H1 (cell line): ENCODE measurements at regions of chr11 and their contacts with region 1.

Region 1: GRCh38 chr11:116641561-116642045 is 131.2 kb downstream of the BUD13 start:
- DNase-seq: peak; percentile 39 to 92
- H3K4me3 ChIP-seq: no peak overlapping the region
- H3K27ac ChIP-seq: no peak overlapping the region
- H3K4me1 ChIP-seq: peaks cover 0 to 9% (median 2%) of the 10 kb centered on the region in 4 experiments; a peak in 5 of 7 replicates
- H3K27me3 ChIP-seq: 0 out of 7 replicates have a peak, but pooled peaks cover 0 to 3% (median 0%) of the 10 kb centered on the region in 4 experiments
- CTCF ChIP-seq: peak; percentile 95 to 100 (median 97)
- EP300 ChIP-seq: no peak
- POLR2A ChIP-seq: no peak
- RAD21 ChIP-seq: peak; percentile 97 to 98

Region 2: DNA sequence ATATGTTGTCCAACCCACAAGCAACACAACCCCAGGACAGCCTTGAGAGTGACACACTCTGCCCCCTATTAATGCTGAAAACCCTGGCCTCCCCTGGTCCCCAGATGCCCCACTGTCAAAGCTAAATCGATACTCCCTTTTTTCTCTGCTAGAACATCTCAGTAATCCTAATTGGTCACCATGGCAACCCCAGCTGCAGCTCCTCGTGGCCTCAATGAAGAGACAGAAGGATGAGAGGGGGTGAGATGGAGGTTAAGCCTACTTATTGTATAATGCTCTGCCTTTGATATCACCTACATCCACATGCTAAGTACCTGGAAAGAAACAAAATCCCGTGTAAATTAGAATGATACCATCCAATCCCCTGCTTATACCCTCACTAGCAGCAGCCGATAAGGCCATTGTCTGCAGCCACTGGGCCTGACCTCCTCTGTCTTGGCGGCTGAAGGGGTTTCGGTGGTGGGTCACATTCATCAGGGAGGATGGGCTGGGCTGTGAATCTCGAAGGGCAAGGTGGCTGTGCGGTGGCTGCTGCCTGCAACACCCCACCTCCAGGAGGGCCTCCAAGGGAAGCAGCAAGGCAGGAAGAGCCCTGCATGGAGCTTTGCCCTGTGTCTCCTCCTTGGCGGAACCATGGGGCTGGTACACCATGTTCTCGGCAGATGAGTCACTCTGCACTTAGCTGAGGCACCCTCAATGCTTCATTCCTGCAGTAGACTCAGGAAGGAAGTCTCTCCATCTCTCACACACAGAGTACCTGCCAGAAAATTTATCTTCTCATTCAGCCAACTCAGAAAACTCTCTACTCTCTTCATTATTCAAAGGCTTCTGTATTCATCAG is 268.3 kb before region 1 on chr11:
- CTCF ChIA-PET with region 1: interaction called, 11 read pairs
- POLR2A ChIA-PET with region 1: no interaction called
- DNase-seq: no peak
- H3K4me3 ChIP-seq: no peak overlapping the region
- H3K27ac ChIP-seq: no peak overlapping the region
- H3K4me1 ChIP-seq: no peaks in the 10 kb centered on the region; a peak in 1 of 7 replicates
- H3K27me3 ChIP-seq: no peaks in the 10 kb centered on the region
- CTCF ChIP-seq: no peak
- EP300 ChIP-seq: no peak
- POLR2A ChIP-seq: no peak
- RAD21 ChIP-seq: no peak

Region 3: GRCh38 chr11:116513894-116514293 is 127.7 kb before region 1 on chr11:
- CTCF ChIA-PET with region 1: interaction called, 94 read pairs
- POLR2A ChIA-PET with region 1: no interaction called
- DNase-seq: peak; percentile 47 to 89
- H3K4me3 ChIP-seq: no peak overlapping the region
- H3K27ac ChIP-seq: no peak overlapping the region
- H3K4me1 ChIP-seq: peaks cover 0 to 8% (median 2%) of the 10 kb centered on the region in 4 experiments; a peak in 3 of 7 replicates
- H3K27me3 ChIP-seq: peaks cover 0 to 4% (median 0%) of the 10 kb centered on the region in 4 experiments; a peak in 2 of 7 replicates
- CTCF ChIP-seq: peak; percentile 61 to 69 (median 65)
- EP300 ChIP-seq: no peak
- POLR2A ChIP-seq: no peak
- RAD21 ChIP-seq: peak; percentile 62 to 76

Region 4: DNA sequence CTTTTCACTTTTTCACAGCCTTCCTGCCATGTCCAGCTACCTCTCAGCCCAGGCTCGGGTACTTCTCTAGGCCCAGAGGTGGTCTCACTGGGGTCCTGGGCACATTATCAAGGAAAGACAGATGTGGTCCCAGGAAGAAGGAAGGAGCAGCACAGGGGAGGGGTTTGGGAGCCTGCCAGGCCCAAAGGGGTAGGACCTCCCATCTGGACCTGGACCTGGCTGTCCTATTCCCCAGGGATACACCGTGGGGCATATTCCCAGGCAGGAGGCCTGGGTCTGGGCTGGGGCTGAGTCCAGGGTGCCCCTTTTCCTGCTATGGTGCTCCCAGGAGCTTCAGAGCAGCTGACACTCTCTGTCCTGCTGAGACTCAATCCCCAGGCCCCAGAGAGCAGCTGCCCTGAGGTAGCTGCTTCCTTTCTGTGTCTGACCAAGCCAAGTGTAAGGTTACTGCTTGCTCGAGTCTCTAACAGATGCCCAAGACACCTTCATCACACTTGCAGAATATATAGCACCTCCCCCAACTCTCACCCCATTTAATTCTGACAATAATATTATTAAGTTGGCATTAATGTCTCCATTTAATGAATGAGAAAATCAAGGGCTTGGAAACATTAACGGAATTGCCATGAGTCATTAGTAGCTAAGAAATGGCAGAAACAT is 100.8 kb before region 1 on chr11:
- CTCF ChIA-PET with region 1: interaction called, 47 read pairs
- POLR2A ChIA-PET with region 1: no interaction called
- DNase-seq: no peak
- H3K4me3 ChIP-seq: no peak overlapping the region
- H3K27ac ChIP-seq: no peak overlapping the region
- H3K4me1 ChIP-seq: no peaks in the 10 kb centered on the region; a peak in 1 of 7 replicates
- H3K27me3 ChIP-seq: peaks cover 0 to 4% (median under 1%) of the 10 kb centered on the region in 4 experiments; a peak in 3 of 7 replicates
- CTCF ChIP-seq: no peak
- EP300 ChIP-seq: no peak
- POLR2A ChIP-seq: no peak
- RAD21 ChIP-seq: no peak

Region 5: GRCh38 chr11:116579031-116579653 is 62.5 kb before region 1 on chr11:
- CTCF ChIA-PET with region 1: interaction called, 25 read pairs
- POLR2A ChIA-PET with region 1: no interaction called
- DNase-seq: peak in 1 of 2 experiments; percentile 54
- H3K4me3 ChIP-seq: peak overlapping the region in 3 of 4 experiments; percentile 26 to 55 (median 35); a peak in 5 of 8 replicates
- H3K27ac ChIP-seq: no peak overlapping the region
- H3K4me1 ChIP-seq: peaks cover 16 to 28% (median 19%) of the 10 kb centered on the region in 4 experiments
- H3K27me3 ChIP-seq: peaks cover 55 to 80% (median 74%) of the 10 kb centered on the region in 4 experiments
- CTCF ChIP-seq: no peak
- EP300 ChIP-seq: no peak
- POLR2A ChIP-seq: no peak
- RAD21 ChIP-seq: no peak

Region 6: DNA sequence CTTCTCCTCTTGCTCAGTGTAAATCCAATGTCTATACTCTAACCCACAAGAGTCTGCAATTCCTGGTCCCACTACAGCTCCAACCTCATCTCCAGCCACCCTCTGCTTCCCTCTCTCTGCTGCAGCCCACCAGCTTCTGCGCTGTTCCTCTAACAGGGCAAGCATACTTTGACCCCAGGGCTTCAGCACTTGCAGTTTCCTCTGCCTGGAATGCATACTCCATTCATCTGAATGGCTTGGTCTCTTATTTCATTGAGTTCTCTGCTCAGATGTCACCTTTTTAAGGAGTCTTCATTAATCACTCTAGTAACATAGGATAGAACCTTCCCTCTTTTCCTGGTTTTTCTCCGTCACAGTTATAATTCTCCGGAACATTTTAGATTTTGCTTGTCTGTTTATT is 10.4 kb before region 1 on chr11:
- CTCF ChIA-PET with region 1: interaction called, 18 read pairs
- POLR2A ChIA-PET with region 1: no interaction called
- DNase-seq: no peak
- H3K4me3 ChIP-seq: no peak overlapping the region
- H3K27ac ChIP-seq: no peak overlapping the region
- H3K4me1 ChIP-seq: no peaks in the 10 kb centered on the region
- H3K27me3 ChIP-seq: no peaks in the 10 kb centered on the region
- CTCF ChIP-seq: no peak
- EP300 ChIP-seq: no peak
- POLR2A ChIP-seq: no peak
- RAD21 ChIP-seq: no peak

Region 7: DNA sequence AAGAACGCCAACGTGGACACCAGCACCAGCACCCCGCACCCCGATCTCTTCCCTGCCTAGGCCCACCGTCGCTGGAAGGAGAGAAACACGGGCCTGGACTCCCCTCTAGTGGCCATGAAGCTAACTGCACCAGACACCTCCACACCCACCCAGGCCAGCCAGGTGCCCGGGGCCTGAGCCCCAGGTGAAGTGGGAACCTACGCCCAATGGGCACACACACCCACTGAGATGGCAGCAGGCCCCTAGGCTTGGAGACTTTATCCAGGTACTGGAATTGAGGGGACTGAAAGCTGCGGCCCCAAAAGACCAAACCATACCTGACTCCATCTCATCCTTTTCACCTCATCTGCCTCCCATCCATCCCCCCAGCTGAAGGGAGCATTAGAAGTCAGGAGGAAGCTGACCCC is 50.2 kb after region 1 on chr11:
- CTCF ChIA-PET with region 1: interaction called, 57 read pairs
- POLR2A ChIA-PET with region 1: interaction called, 3 read pairs
- DNase-seq: peak in 1 of 2 experiments; percentile 95
- H3K4me3 ChIP-seq: no peak overlapping the region
- H3K27ac ChIP-seq: no peak overlapping the region
- H3K4me1 ChIP-seq: peaks cover 10 to 26% (median 19%) of the 10 kb centered on the region in 4 experiments
- H3K27me3 ChIP-seq: no peaks in the 10 kb centered on the region; a peak in 1 of 7 replicates
- CTCF ChIP-seq: peak; percentile 93 to 95 (median 93)
- EP300 ChIP-seq: no peak
- POLR2A ChIP-seq: no peak
- RAD21 ChIP-seq: peak; percentile 99

Region 8: DNA sequence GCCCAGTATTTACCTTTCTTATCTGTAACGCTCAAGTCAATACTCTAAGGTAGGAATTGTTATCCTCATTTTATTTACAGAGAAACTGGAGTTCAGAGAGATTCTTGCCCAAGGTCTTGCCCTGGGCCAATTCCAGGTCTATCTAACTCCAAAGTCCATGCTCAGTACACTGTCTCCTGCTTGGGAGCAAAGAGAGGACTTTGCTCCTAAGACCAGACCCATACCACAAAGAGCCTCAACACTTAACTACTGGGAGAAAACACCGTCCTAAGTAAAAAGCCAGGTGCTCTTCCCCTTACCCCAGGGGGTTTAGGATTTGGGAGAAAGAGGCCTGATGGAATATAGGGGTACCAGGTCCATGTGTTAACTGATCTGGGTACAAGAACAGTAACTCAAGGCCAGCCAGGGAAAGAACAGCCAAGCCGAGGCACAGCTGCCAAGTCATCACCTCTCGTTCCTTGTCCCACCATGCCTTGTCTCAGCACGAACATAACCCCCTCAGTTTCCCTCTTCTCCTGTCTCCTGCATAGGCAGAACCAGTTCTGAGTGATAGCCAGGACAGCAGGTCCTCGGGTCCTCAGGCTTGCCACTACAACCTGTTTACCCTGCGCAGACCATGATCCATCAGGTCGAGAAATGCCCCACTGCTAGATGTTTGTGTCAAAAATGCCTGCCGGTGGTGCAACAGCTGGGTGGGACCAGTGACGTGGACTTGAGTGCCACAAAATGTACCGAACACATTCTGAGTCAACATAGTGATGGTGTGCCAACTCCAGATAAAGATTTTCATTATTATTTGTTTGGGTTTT is 167.0 kb after region 1 on chr11:
- CTCF ChIA-PET with region 1: no interaction called
- POLR2A ChIA-PET with region 1: no interaction called
- DNase-seq: no peak
- H3K4me3 ChIP-seq: no peak overlapping the region
- H3K27ac ChIP-seq: no peak overlapping the region
- H3K4me1 ChIP-seq: no peaks in the 10 kb centered on the region
- H3K27me3 ChIP-seq: no peaks in the 10 kb centered on the region
- CTCF ChIP-seq: no peak
- EP300 ChIP-seq: no peak
- POLR2A ChIP-seq: no peak
- RAD21 ChIP-seq: no peak

Region 9: DNA sequence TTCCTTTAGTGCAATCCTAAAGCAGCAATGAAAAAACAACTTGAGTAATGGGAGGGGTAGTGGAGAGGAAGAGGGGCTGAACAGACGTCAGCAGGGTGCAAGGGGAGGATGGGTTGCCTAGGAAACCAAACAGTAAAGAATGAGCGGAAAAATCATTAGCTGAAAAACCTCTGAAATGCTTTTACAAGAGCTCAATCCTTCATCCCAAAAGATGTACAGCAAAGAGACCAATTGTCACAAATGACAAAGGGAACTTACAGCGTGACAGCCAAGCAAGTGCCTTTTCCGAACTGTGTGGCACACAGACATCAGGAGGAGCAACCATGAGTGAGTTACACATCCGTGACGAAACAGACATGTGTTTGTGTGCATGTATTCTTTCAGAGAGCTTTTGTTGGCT is 352.0 kb after region 1 on chr11:
- CTCF ChIA-PET with region 1: no interaction called
- POLR2A ChIA-PET with region 1: no interaction called
- DNase-seq: no peak
- H3K4me3 ChIP-seq: no peak overlapping the region
- H3K27ac ChIP-seq: peak overlapping the region; percentile 66; the same call in 1 of the 2 replicates
- H3K4me1 ChIP-seq: peaks cover 0 to 9% (median 5%) of the 10 kb centered on the region in 4 experiments; a peak in 5 of 7 replicates
- H3K27me3 ChIP-seq: no peaks in the 10 kb centered on the region
- CTCF ChIP-seq: no peak
- EP300 ChIP-seq: no peak
- POLR2A ChIP-seq: no peak
- RAD21 ChIP-seq: no peak